IMR-90 (cell line): ENCODE measurements at regions of chr1 and their contacts with region 1.

Region 1: DNA sequence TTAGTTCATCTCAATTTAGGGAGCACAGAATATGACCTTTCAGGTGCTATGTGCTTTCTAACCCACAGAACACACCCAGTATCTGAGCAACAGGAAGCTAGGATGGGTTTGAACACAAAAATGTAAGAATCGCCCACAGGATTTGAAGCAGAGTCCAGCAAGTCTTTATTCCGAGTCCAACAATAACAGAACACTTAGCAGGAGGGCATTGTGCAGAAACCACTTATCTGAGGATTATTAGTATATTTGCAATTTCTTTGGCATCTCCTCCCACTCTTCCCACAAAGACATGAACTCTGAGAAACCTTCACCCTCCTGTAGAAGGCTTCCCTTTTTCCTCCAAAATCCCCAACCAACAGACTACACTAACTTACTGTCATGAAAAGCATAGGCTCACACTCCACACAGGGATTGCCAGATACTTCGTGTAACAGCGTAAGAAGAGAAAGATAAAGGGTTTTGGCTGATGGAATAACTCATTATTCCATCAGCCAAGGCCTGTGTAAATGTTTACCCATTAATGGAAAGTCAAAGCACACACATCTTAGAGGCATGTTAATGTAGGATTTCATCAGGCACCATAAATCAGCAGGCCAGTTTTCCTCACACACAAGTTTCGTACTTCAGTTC is 16.1 kb downstream of the SIPA1L2 start:
- DNase-seq: peak; percentile 94
- ATAC-seq: peak; percentile 88
- H3K4me3 ChIP-seq: no peak overlapping the region
- H3K27ac ChIP-seq: peak overlapping the region; percentile 58; the same call in 1 of the 2 replicates
- H3K4me1 ChIP-seq: peaks cover 14% of the 10 kb centered on the region
- H3K27me3 ChIP-seq: no peaks in the 10 kb centered on the region
- CTCF ChIP-seq: no peak
- POLR2A ChIP-seq: no peak
- RAD21 ChIP-seq: no peak

Region 2: GRCh38 chr1:232012773-232013386 is 601.0 kb before region 1 on chr1:
- CTCF ChIA-PET with region 1: no interaction called
- POLR2A ChIA-PET with region 1: no interaction called
- dilution Hi-C with region 1: no loop called
- in situ Hi-C with region 1: loop called (anchors 10 kb)
- intact Hi-C with region 1: no loop called
- DNase-seq: peak; percentile 96
- ATAC-seq: peak; percentile 70
- H3K4me3 ChIP-seq: no peak overlapping the region
- H3K27ac ChIP-seq: peak overlapping the region; percentile 2; the same call in 1 of the 2 replicates
- H3K4me1 ChIP-seq: peaks cover 16% of the 10 kb centered on the region
- H3K27me3 ChIP-seq: no peaks in the 10 kb centered on the region
- CTCF ChIP-seq: no peak
- POLR2A ChIP-seq: no peak
- RAD21 ChIP-seq: no peak

Region 3: GRCh38 chr1:232477728-232478127 is 136.1 kb before region 1 on chr1:
- CTCF ChIA-PET with region 1: no interaction called
- POLR2A ChIA-PET with region 1: no interaction called
- dilution Hi-C with region 1: no loop called
- in situ Hi-C with region 1: no loop called
- intact Hi-C with region 1: loop called (anchors 5 kb)
- DNase-seq: peak; percentile 98
- ATAC-seq: peak; percentile 79
- H3K4me3 ChIP-seq: no peak overlapping the region
- H3K27ac ChIP-seq: no peak overlapping the region
- H3K4me1 ChIP-seq: peaks cover 14% of the 10 kb centered on the region
- H3K27me3 ChIP-seq: no peaks in the 10 kb centered on the region
- CTCF ChIP-seq: no peak
- POLR2A ChIP-seq: no peak
- RAD21 ChIP-seq: no peak

Region 4: GRCh38 chr1:232519186-232519585 is 94.7 kb before region 1 on chr1:
- CTCF ChIA-PET with region 1: no interaction called
- POLR2A ChIA-PET with region 1: no interaction called
- dilution Hi-C with region 1: no loop called
- in situ Hi-C with region 1: no loop called
- intact Hi-C with region 1: loop called (anchors 5 kb)
- DNase-seq: no peak
- ATAC-seq: no peak
- H3K4me3 ChIP-seq: no peak overlapping the region
- H3K27ac ChIP-seq: no peak overlapping the region
- H3K4me1 ChIP-seq: peaks cover 4% of the 10 kb centered on the region; the same call in 1 of the 2 replicates
- H3K27me3 ChIP-seq: no peaks in the 10 kb centered on the region
- CTCF ChIP-seq: no peak
- POLR2A ChIP-seq: no peak
- RAD21 ChIP-seq: no peak